ENCODE measurements at regions of chr1 and their contacts with region 1.

Region 1: DNA sequence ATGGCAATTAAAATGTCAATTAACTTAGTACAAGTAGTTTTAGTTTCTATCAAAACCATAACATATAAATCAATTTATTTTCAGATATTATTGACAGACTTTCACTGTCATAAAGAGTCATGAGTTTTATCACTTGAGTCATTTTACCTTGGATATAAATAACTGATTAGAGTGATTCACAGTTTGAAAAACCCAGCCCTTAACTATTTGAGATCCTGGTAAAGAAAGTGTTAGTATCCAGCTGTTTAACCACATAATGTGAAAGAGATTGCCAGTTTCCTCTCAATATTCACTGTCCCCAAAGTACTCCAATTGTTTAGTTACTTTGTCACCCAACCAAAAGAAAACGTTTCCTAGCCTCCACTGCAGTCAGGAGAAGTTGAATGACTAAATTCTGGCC is 91.3 kb downstream of the UCHL5 start:
- DNase-seq: peak; percentile 51
- H3K4me3 ChIP-seq: peak overlapping the region in 1 of 3 experiments; percentile 22
- H3K27ac ChIP-seq: peak overlapping the region; percentile 93
- H3K4me1 ChIP-seq: peaks cover 25% of the 10 kb centered on the region
- H3K27me3 ChIP-seq: no peaks in the 10 kb centered on the region
- CTCF ChIP-seq: no peak
- POLR2A ChIP-seq: no peak

Region 2: GRCh38 chr1:192936313-192937018 is 31.4 kb before region 1 on chr1:
- CTCF ChIA-PET with region 1: no interaction called
- POLR2A ChIA-PET with region 1: no interaction called
- dilution Hi-C with region 1: no loop called
- intact Hi-C with region 1: loop called (anchors 2 kb)
- DNase-seq: peak; percentile 84
- H3K4me3 ChIP-seq: no peak overlapping the region
- H3K27ac ChIP-seq: peak overlapping the region; percentile 20
- H3K4me1 ChIP-seq: peaks cover 18% of the 10 kb centered on the region
- H3K27me3 ChIP-seq: no peaks in the 10 kb centered on the region
- CTCF ChIP-seq: no peak
- POLR2A ChIP-seq: no peak

Measured in endothelial cell of umbilical vein (primary cell).